Endothelial cell of umbilical vein (primary cell): ENCODE measurements at regions of chr2 and their contacts with region 1.

Region 1: GRCh38 chr2:12819103-12819475 is 102.4 kb downstream of the TRIB2 start:
- DNase-seq: peak; percentile 97
- H3K4me3 ChIP-seq: peak overlapping the region in 1 of 3 experiments; percentile 41
- H3K27ac ChIP-seq: peak overlapping the region; percentile 96
- H3K4me1 ChIP-seq: peaks cover 32% of the 10 kb centered on the region
- H3K27me3 ChIP-seq: no peaks in the 10 kb centered on the region
- CTCF ChIP-seq: no peak
- POLR2A ChIP-seq: peak; percentile 52

Region 2: DNA sequence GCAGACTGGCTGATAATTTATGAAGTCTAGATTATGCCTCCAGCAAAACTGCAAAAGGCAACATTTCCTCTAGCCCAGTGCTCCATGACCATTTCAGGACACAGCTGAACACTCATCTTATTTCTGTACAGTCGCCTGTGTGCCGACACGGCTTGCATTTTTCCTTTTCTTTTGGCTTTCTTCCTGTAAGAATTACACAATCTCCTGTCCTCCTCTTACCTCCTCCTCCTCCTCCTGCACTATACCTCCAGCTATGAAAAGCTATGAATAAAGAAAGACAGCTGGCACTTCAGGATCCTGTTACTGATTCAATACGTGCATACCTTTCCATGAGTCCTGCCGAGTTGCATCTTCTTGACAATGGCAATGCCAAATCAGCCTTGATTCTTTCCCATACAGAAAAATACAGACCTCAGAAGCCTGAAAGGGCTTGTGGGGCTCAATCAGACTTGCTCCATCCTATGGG is 134.6 kb before region 1 on chr2:
- CTCF ChIA-PET with region 1: no interaction called
- POLR2A ChIA-PET with region 1: no interaction called
- dilution Hi-C with region 1: no loop called
- intact Hi-C with region 1: no loop called
- DNase-seq: peak; percentile 27
- H3K4me3 ChIP-seq: no peak overlapping the region
- H3K27ac ChIP-seq: no peak overlapping the region
- H3K4me1 ChIP-seq: no peaks in the 10 kb centered on the region
- H3K27me3 ChIP-seq: peaks cover 4 to 5% of the 10 kb centered on the region in 2 experiments
- CTCF ChIP-seq: no peak
- POLR2A ChIP-seq: no peak

Region 3: DNA sequence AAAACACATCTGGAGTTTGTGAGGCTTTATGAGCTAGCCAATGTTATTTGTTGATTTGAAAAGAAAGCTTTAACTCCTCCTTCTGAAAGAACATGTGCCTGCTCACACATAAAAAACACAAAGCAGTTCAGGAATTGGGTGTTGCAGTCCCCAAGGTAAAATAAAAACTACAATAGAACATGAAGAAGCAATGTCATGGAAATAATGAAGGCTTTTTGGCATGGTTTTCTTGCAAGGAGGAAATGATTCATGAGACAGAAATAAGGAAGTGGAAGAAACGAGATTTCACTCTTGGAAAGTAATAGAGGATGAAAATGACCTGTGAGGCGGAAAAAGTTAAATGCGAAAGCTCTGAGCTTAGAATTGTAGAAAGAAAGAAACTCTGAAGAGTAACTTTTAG is 21.3 kb before region 1 on chr2:
- CTCF ChIA-PET with region 1: interaction called, 3 read pairs
- POLR2A ChIA-PET with region 1: no interaction called
- dilution Hi-C with region 1: no loop called
- intact Hi-C with region 1: loop called (anchors 1 kb)
- DNase-seq: peak; percentile 92
- H3K4me3 ChIP-seq: no peak overlapping the region
- H3K27ac ChIP-seq: peak overlapping the region; percentile 85
- H3K4me1 ChIP-seq: peaks cover 24% of the 10 kb centered on the region
- H3K27me3 ChIP-seq: no peaks in the 10 kb centered on the region
- CTCF ChIP-seq: no peak
- POLR2A ChIP-seq: no peak

Region 4: GRCh38 chr2:12807907-12808810 is 10.9 kb before region 1 on chr2:
- CTCF ChIA-PET with region 1: interaction called, 11 read pairs
- POLR2A ChIA-PET with region 1: no interaction called
- dilution Hi-C with region 1: no loop called
- intact Hi-C with region 1: no loop called
- DNase-seq: peak; percentile 31
- H3K4me3 ChIP-seq: no peak overlapping the region
- H3K27ac ChIP-seq: no peak overlapping the region
- H3K4me1 ChIP-seq: peaks cover 14% of the 10 kb centered on the region
- H3K27me3 ChIP-seq: no peaks in the 10 kb centered on the region
- CTCF ChIP-seq: no peak
- POLR2A ChIP-seq: no peak

Region 5: DNA sequence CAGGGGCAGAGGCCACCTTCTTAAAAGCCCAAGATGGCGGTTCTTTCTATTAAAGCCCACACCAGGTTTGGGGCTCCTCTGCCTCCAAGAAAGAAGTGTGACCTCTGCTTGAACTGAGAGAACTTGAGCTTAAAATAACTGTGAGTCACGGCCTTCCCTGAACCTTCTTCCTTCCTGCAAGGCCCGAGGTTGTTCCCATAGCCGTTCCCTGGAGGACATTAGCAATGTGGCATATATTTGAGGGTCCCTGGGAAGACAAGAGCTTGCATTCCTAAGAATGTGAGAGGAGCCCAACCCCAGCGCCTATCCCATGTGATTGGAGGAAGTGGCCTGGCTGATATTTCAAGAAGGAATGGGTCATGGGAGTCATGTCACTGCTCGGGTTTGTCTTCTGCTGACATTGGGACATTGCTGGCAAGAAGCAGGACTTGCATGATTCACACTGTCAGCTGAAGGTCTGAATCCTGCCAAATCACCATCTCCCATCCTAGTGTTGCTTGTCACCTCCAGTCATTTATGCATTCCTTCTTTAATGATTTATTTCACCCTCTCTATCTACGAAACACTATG is 65.7 kb after region 1 on chr2:
- CTCF ChIA-PET with region 1: no interaction called
- POLR2A ChIA-PET with region 1: no interaction called
- dilution Hi-C with region 1: no loop called
- intact Hi-C with region 1: loop called (anchors 1 kb)
- DNase-seq: peak; percentile 59
- H3K4me3 ChIP-seq: no peak overlapping the region
- H3K27ac ChIP-seq: peak overlapping the region; percentile 70
- H3K4me1 ChIP-seq: peaks cover 17% of the 10 kb centered on the region
- H3K27me3 ChIP-seq: no peaks in the 10 kb centered on the region
- CTCF ChIP-seq: no peak
- POLR2A ChIP-seq: no peak

Region 6: GRCh38 chr2:12895017-12895416 is 75.9 kb after region 1 on chr2:
- CTCF ChIA-PET with region 1: no interaction called
- POLR2A ChIA-PET with region 1: no interaction called
- dilution Hi-C with region 1: no loop called
- intact Hi-C with region 1: no loop called
- DNase-seq: no peak
- H3K4me3 ChIP-seq: no peak overlapping the region
- H3K27ac ChIP-seq: no peak overlapping the region
- H3K4me1 ChIP-seq: no peaks in the 10 kb centered on the region
- H3K27me3 ChIP-seq: no peaks in the 10 kb centered on the region
- CTCF ChIP-seq: no peak
- POLR2A ChIP-seq: no peak

Region 7: DNA sequence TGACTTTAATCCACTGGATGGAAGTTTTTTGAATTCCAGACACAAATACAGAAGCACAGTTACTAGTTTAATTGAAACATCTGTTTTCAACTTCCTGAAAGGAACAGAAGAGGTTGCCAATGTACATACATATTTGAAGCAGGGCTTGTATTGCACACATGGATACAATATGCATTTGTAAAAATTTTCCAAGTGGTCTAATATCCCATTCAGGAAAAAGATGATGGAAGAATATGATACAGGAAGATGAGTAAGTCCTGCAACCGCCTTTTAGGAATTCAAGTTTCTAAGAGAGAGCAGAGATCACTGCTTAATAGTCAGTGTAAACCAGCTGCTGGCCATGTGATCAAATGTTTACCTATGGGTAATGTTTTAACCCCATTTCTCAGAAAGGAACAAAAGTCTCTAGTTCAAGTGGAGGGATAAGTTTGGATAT is 163.1 kb after region 1 on chr2:
- CTCF ChIA-PET with region 1: no interaction called
- POLR2A ChIA-PET with region 1: no interaction called
- dilution Hi-C with region 1: no loop called
- intact Hi-C with region 1: loop called (anchors 1 kb)
- DNase-seq: peak; percentile 90
- H3K4me3 ChIP-seq: no peak overlapping the region
- H3K27ac ChIP-seq: peak overlapping the region; percentile 50
- H3K4me1 ChIP-seq: peaks cover 28% of the 10 kb centered on the region
- H3K27me3 ChIP-seq: no peaks in the 10 kb centered on the region
- CTCF ChIP-seq: no peak
- POLR2A ChIP-seq: no peak